Posterior cingulate gyrus (tissue), 11 donors: ENCODE measurements at regions of chr2 and their contacts with region 1.

Region 1: GRCh38 chr2:10054424-10054823 is 11.1 kb downstream of the KLF11 start:
- DNase-seq: peak in 3 of 10 donors; percentile 63 to 83 (median 65)

Region 2: GRCh38 chr2:9799665-9800632 is 254.5 kb before region 1 on chr2:
- intact Hi-C with region 1: loop called (anchors 5 kb)
- DNase-seq: peak; percentile 65 to 97 (median 88)